HepG2 (cell line): ENCODE measurements at regions of chr10 and their contacts with region 1.

Region 1: GRCh38 chr10:92573798-92574547 is at the start of gene IDE:
- DNase-seq: peak; percentile 80
- ATAC-seq: peak; percentile 87
- H3K4me3 ChIP-seq: peak within 1 kb of the TSS; percentile 69 to 97 (median 96)
- H3K27ac ChIP-seq: peak within 1 kb of the TSS; percentile 98
- H3K4me1 ChIP-seq: peaks cover 40% of the 10 kb centered on the region
- H3K27me3 ChIP-seq: no peaks in the 10 kb centered on the region; a peak in 1 of 5 replicates
- CTCF ChIP-seq: peak; percentile 96
- EP300 ChIP-seq: no peak
- POLR2A ChIP-seq: peak; percentile 87 to 88
- RAD21 ChIP-seq: peak; percentile 78
- total RNA-seq, gene IDE: 52.1 and 94.3 TPM in 2 replicates

Region 2: DNA sequence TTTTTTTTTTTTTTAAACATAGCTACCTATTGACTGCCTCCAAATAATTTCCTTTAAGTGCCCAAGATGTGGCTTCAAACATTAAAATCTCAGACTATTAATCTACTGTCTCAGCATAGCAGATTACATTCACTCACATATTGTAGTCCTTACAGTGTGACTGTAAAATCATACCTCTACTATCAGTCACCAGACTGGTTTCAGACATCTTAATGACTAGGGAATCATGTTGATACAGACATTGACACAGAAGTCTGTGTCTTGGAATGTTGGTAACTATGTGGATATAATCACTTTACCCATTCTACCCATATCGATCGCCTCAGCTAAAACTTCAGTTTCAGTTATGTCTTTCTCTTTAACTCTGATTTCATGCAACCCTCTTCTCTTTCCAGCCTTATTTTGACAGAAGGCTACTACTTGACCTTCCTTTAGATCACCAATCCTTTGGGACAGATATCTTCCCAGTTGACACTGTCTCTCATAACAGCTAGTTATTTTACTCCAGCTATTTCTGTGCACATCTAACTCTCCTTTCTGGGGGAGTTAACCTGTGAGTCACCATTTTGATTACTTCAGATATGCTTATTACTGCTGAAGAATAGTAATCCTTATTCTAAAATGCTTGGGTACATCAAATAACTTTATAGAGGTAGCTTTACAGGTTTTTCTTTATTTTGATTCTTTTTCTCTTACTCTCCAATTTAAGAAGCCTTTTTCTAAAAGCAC is 768.7 kb before region 1 on chr10:
- CTCF ChIA-PET with region 1: no interaction called
- POLR2A ChIA-PET with region 1: no interaction called
- in situ Hi-C with region 1: no loop called
- intact Hi-C with region 1: no loop called
- DNase-seq: no peak
- ATAC-seq: no peak
- H3K4me3 ChIP-seq: no peak overlapping the region
- H3K27ac ChIP-seq: peak overlapping the region; percentile 90
- H3K4me1 ChIP-seq: peaks cover 55% of the 10 kb centered on the region
- H3K27me3 ChIP-seq: no peaks in the 10 kb centered on the region
- CTCF ChIP-seq: no peak
- EP300 ChIP-seq: no peak
- POLR2A ChIP-seq: no peak
- RAD21 ChIP-seq: no peak

Region 3: DNA sequence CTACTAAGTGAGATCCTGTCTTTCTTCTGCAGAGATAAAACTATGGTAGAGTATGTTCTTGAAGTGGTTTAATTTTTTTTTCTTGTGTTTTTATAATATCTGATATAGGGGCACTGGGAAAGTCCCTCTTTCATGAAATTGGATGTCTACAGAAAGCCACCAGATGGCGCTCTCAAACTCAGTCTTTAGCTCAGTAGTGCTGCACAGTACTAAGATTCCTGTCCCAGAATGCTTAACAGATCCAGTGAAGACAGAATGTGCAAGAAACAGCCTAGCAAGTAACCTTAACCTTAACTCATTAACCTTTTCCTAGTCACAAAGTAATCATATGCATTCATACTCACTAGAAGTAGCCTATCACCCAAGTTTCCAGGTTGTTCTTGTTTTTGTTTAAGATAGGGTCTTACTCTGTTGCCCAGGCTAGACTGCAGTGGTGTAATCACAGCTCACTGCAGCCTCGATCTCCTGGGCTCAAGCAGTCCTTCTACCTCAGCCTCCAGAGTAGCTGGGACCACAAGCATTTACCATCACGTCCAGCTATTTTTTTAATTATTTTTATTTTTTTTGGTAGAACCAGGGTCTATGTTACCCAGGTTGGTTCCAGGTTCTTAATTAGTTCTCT is 56.8 kb before region 1 on chr10:
- CTCF ChIA-PET with region 1: interaction called, 38 read pairs
- POLR2A ChIA-PET with region 1: interaction called, 13 read pairs
- in situ Hi-C with region 1: loop called (anchors 5 kb)
- intact Hi-C with region 1: loop called (anchors 1 kb)
- DNase-seq: peak; percentile 66
- ATAC-seq: peak; percentile 95
- H3K4me3 ChIP-seq: no peak overlapping the region
- H3K27ac ChIP-seq: no peak overlapping the region
- H3K4me1 ChIP-seq: no peaks in the 10 kb centered on the region
- H3K27me3 ChIP-seq: no peaks in the 10 kb centered on the region; a peak in 1 of 5 replicates
- CTCF ChIP-seq: peak; percentile 77
- EP300 ChIP-seq: no peak
- POLR2A ChIP-seq: no peak
- RAD21 ChIP-seq: no peak

Region 4: GRCh38 chr10:92523639-92524038 is 50.3 kb before region 1 on chr10:
- CTCF ChIA-PET with region 1: no interaction called
- POLR2A ChIA-PET with region 1: no interaction called
- in situ Hi-C with region 1: loop called (anchors 5 kb)
- intact Hi-C with region 1: no loop called
- DNase-seq: no peak
- ATAC-seq: no peak
- H3K4me3 ChIP-seq: no peak overlapping the region
- H3K27ac ChIP-seq: no peak overlapping the region
- H3K4me1 ChIP-seq: no peaks in the 10 kb centered on the region
- H3K27me3 ChIP-seq: no peaks in the 10 kb centered on the region
- CTCF ChIP-seq: no peak
- EP300 ChIP-seq: no peak
- POLR2A ChIP-seq: no peak
- RAD21 ChIP-seq: no peak

Region 5: DNA sequence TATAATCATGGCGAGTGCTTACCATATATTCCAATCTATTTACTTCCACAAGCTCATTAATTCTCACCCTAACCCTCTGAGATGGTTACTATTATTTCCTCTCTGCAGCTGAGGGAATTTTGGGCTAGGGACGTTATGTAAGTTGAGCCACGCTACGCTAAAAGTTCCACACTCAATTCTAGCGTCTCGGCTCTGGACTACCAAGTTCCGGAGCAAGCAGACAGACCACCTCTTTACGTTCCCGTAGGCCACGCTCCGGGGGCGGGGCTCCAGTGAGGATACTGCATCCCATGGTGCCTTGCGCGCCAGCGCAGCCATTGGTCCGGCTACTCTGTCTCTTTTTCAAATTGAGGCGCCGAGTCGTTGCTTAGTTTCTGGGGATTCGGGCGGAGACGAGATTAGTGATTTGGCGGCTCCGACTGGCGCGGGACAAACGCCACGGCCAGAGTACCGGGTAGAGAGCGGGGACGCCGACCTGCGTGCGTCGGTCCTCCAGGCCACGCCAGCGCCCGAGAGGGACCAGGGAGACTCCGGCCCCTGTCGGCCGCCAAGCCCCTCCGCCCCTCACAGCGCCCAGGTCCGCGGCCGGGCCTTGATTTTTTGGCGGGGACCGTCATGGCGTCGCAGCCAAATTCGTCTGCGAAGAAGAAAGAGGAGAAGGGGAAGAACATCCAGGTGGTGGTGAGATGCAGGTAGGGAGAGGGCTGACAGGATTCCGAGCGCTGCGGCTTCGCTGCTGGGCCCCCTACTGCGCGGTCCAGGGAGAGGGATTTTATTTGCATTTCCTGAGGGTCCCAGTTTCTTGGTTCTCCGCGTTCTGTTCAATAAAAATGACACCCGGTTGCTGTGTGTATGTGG is 19.0 kb after region 1 on chr10 and contains the start of gene KIF11:
- CTCF ChIA-PET with region 1: no interaction called
- POLR2A ChIA-PET with region 1: interaction called, 71 read pairs
- in situ Hi-C with region 1: no loop called
- intact Hi-C with region 1: loop called (anchors 2 kb)
- DNase-seq: peak; percentile 95
- ATAC-seq: peak; percentile 88
- H3K4me3 ChIP-seq: peak within 1 kb of the TSS; percentile 81 to 91 (median 88)
- H3K27ac ChIP-seq: peak within 1 kb of the TSS; percentile 88
- H3K4me1 ChIP-seq: peaks cover 37% of the 10 kb centered on the region
- H3K27me3 ChIP-seq: no peaks in the 10 kb centered on the region; a peak in 1 of 5 replicates
- CTCF ChIP-seq: peak; percentile 25; the same call in 1 of the 2 replicates
- EP300 ChIP-seq: 0 out of 4 replicates have a peak, but pooled peaks have one; percentile 18 to 35
- POLR2A ChIP-seq: peak; percentile 96 to 97
- RAD21 ChIP-seq: no peak
- total RNA-seq, gene KIF11: 38.4 and 62.8 TPM in 2 replicates

Region 6: DNA sequence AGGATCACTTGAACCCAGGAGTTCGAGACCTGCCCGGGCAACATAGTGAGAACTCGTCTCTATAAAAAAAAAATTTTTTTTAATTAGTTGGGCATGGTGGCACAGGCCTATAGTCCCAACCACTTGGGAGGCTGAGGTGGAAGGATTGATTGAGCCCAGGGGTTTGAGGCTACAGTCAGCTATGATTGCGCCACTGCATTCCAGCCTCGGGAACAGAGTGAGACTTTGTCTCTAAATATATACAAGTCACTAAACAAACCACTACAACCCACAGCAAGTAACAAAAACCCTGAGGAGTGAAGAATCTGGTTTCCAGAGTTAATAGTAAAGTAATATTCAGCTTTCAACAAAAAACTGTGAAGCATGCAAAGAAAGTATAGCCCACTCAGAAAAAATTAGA is 83.1 kb after region 1 on chr10:
- CTCF ChIA-PET with region 1: no interaction called
- POLR2A ChIA-PET with region 1: no interaction called
- in situ Hi-C with region 1: no loop called
- intact Hi-C with region 1: no loop called
- DNase-seq: peak; percentile 49
- ATAC-seq: peak; percentile 83
- H3K4me3 ChIP-seq: no peak overlapping the region
- H3K27ac ChIP-seq: no peak overlapping the region
- H3K4me1 ChIP-seq: peaks cover 16% of the 10 kb centered on the region
- H3K27me3 ChIP-seq: no peaks in the 10 kb centered on the region
- CTCF ChIP-seq: no peak
- EP300 ChIP-seq: peak in 1 of 2 experiments; percentile 12; a peak in 1 of 4 replicates
- POLR2A ChIP-seq: no peak
- RAD21 ChIP-seq: no peak